ENCODE measurements at regions of chr2 and their contacts with region 1.

Region 1: DNA sequence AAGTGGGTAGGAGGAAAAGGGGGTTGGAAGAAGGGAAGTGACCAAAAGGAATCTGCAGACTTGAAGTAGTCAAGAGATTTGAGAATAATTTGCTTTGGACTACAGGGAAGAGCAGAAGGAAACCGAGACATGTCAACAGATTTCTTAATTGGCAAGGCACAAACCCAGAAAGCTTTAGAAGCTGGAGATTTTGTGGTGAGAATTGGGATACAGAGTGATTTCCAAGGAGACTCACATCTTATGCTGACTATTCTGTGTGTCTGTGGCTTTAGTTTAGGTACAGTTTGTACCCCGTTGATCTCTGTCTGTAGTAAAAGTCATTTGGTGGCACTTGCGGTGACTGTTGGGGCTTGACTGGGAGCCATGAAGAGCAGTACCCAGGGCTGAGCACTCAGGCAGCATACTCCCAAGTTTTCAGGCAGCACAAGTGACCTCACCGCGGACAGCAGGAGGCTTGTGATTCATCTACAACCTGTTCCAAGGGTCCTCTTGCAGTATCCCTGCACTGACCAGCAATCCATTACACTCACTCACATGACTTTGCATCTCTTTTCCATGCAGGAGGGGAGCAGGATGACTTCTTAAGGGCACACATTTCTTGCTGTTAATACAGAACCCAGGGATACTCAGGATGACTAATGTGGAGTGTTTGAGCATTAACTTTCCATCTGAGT is 97.1 kb upstream of the TNP1 start:
- DNase-seq: no peak
- H3K4me3 ChIP-seq: no peak overlapping the region
- H3K27ac ChIP-seq: no peak overlapping the region
- H3K4me1 ChIP-seq: no peaks in the 10 kb centered on the region
- H3K27me3 ChIP-seq: no peaks in the 10 kb centered on the region
- CTCF ChIP-seq: no peak
- POLR2A ChIP-seq: no peak

Region 2: GRCh38 chr2:216777650-216778273 is 179.2 kb before region 1 on chr2:
- intact Hi-C with region 1: no loop called
- DNase-seq: no peak
- H3K4me3 ChIP-seq: no peak overlapping the region
- H3K27ac ChIP-seq: no peak overlapping the region
- H3K4me1 ChIP-seq: no peaks in the 10 kb centered on the region
- H3K27me3 ChIP-seq: no peaks in the 10 kb centered on the region
- CTCF ChIP-seq: peak; percentile 18 to 55 (median 33)
- POLR2A ChIP-seq: no peak

Region 3: DNA sequence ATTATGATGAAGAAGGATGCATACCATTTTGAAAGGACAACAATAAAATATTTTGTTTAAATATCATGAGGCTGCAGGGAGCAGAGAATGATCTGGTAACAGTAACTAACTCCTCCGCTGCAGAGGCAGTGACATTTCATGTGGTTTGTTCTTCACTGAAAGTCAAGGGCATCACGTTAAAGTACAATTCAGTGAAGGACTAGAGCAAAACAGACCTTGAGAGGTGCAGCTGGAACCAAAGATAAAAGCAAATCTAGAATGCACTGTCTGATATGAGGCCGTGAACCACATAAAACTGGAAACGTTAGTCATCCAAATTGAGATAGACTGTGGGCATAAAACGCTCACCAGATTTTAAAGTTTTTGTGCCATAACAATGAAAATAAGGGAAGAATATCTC is 425.8 kb after region 1 on chr2:
- intact Hi-C with region 1: loop called (anchors 5 kb)
- DNase-seq: no peak
- H3K4me3 ChIP-seq: no peak overlapping the region
- H3K27ac ChIP-seq: no peak overlapping the region
- H3K4me1 ChIP-seq: no peaks in the 10 kb centered on the region
- H3K27me3 ChIP-seq: no peaks in the 10 kb centered on the region
- CTCF ChIP-seq: no peak
- POLR2A ChIP-seq: no peak